GM12878 (cell line): ENCODE measurements at regions of chr11 and their contacts with region 1.

Region 1: GRCh38 chr11:124793466-124794278 is 6.5 kb downstream of the MSANTD2 start:
- DNase-seq: no peak
- ATAC-seq: peak; percentile 80
- H3K4me3 ChIP-seq: no peak overlapping the region
- H3K27ac ChIP-seq: no peak overlapping the region
- H3K4me1 ChIP-seq: peaks cover 16% of the 10 kb centered on the region
- H3K27me3 ChIP-seq: no peaks in the 10 kb centered on the region
- CTCF ChIP-seq: peak; percentile 65 to 72 (median 70)
- EP300 ChIP-seq: no peak
- POLR2A ChIP-seq: no peak
- RAD21 ChIP-seq: peak; percentile 68

Region 2: DNA sequence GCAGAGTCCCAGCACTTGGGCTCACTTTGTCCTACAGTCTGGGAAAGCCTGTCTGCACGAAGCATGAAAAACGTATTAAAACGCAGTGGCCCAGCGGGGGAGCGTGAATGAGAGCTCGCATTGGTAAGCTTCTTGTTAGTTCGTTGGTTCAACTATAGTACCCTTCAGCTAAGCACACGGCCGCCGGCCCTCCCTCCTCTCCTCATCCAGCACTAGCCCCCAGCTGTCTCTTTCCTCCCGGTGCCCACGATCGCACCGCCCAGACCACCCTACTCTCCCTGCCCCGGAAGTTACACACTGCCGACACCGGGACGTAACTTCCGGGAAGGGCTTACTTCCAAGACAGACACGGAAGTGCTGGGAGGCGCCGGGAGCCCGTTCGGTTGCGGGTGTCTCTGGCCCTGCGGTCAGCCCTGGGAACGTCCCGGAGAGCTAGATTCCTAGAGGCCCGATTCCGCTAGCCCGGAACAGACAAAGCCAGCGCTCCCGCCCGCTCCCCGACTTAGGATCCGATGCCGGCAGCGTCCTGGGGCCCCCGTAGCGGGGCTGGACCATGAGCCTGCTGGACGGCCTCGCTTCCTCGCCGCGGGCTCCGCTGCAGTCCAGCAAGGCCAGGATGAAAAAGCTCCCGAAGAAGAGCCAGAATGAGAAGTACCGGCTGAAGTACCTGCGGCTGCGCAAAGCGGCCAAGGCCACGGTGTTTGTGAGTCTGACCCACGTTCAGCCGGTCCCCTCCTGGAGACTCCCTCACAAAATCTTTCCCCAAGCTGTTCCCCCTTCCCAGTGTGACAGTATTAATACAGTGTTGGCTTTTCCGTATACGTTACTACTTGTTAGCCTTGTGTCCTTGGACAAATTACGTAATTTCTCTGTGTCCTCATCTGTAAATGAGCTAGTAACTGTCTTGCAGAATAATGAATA is 170.9 kb before region 1 on chr11 and contains the start of gene TBRG1:
- CTCF ChIA-PET with region 1: interaction called, 14 read pairs
- POLR2A ChIA-PET with region 1: no interaction called
- RAD21 ChIA-PET with region 1: no interaction called
- SMC1A ChIA-PET with region 1: no interaction called
- in situ Hi-C with region 1: no loop called
- intact Hi-C with region 1: no loop called
- DNase-seq: peak; percentile 50
- ATAC-seq: peak; percentile 96
- H3K4me3 ChIP-seq: peak within 1 kb of the TSS; percentile 95
- H3K27ac ChIP-seq: peak within 1 kb of the TSS; percentile 60
- H3K4me1 ChIP-seq: no peaks in the 10 kb centered on the region
- H3K27me3 ChIP-seq: peaks cover 0 to 2% of the 10 kb centered on the region in 2 experiments; a peak in 1 of 4 replicates
- CTCF ChIP-seq: no peak
- EP300 ChIP-seq: no peak
- POLR2A ChIP-seq: peak; percentile 97
- RAD21 ChIP-seq: no peak
- polyA plus RNA-seq, gene TBRG1: 12.3 to 18.6 TPM

Region 3: DNA sequence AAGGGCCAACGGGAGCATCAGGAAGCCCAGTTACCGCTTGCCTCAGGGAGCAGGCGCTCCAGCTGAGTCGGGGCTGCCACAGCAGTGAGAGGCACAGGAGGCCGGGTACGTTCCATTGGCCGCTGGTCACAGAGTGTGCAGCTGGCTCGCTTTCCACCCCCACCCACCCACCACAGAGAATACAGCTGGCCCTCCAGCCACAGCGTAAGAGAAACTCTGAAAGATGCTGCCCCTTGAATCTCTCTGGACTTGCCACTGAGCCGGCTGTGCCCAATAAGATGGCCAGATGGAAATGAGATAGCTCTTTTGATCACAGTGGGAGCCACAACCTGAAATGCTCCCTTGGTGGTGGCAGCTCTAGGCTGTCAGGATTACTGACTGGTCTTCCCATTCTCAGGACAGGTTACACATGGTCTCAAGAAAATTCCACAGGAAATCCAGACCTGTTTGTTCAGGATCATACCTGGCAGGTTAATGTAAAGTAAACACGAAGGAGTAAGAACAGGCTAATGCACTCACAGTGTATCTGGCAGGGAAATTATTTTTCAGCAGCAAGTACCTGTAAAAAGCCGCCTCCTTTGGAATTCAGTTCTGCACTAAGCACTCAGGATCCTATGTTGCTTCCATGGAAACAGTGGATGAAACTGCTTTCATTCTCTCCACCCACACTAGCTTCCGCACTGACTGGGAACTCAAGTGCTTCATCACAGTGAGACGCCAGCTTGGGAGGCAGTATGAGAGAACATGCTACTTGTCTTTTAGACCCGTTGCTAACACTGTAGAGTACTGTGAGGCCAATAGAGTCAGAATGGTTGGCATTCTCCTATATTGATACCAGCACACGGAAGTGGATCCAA is 136.7 kb before region 1 on chr11:
- CTCF ChIA-PET with region 1: interaction called, 11 read pairs
- POLR2A ChIA-PET with region 1: no interaction called
- RAD21 ChIA-PET with region 1: no interaction called
- SMC1A ChIA-PET with region 1: no interaction called
- in situ Hi-C with region 1: no loop called
- intact Hi-C with region 1: no loop called
- DNase-seq: no peak
- ATAC-seq: no peak
- H3K4me3 ChIP-seq: no peak overlapping the region
- H3K27ac ChIP-seq: no peak overlapping the region
- H3K4me1 ChIP-seq: no peaks in the 10 kb centered on the region
- H3K27me3 ChIP-seq: no peaks in the 10 kb centered on the region
- CTCF ChIP-seq: no peak
- EP300 ChIP-seq: no peak
- POLR2A ChIP-seq: no peak
- RAD21 ChIP-seq: no peak

Region 4: DNA sequence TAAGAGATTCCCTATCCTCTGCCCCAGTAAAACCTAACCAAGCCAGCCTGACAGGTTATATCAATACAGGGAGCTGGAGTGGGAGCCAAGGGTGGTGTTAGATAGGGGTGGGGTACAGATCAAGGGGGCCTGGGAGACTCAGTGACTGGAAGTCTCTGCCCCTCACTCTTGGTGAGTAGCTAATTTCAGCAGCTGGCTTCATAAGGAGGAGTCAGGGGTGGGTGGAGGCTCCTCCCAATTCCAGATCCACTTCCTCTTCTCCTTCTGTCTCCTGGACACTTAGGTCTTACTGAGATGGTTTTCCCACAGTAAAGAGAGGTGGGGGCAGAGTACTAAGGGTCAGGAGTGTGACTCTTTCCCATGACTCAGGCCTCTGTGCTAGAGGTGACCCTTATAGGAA is 40.5 kb before region 1 on chr11:
- CTCF ChIA-PET with region 1: interaction called, 272 read pairs
- POLR2A ChIA-PET with region 1: interaction called, 5 read pairs
- RAD21 ChIA-PET with region 1: interaction called, 5 read pairs
- SMC1A ChIA-PET with region 1: interaction called, 12 read pairs
- in situ Hi-C with region 1: no loop called
- intact Hi-C with region 1: no loop called
- DNase-seq: no peak
- ATAC-seq: no peak
- H3K4me3 ChIP-seq: no peak overlapping the region
- H3K27ac ChIP-seq: no peak overlapping the region
- H3K4me1 ChIP-seq: peaks cover 2% of the 10 kb centered on the region; the same call in 1 of the 2 replicates
- H3K27me3 ChIP-seq: no peaks in the 10 kb centered on the region
- CTCF ChIP-seq: no peak
- EP300 ChIP-seq: no peak
- POLR2A ChIP-seq: no peak
- RAD21 ChIP-seq: no peak

Region 5: GRCh38 chr11:124769801-124770639 is 23.7 kb before region 1 on chr11:
- CTCF ChIA-PET with region 1: interaction called, 272 read pairs
- POLR2A ChIA-PET with region 1: interaction called, 5 read pairs
- RAD21 ChIA-PET with region 1: interaction called, 3 read pairs
- SMC1A ChIA-PET with region 1: interaction called, 40 read pairs
- in situ Hi-C with region 1: no loop called
- intact Hi-C with region 1: no loop called
- DNase-seq: no peak
- ATAC-seq: no peak
- H3K4me3 ChIP-seq: no peak overlapping the region
- H3K27ac ChIP-seq: no peak overlapping the region
- H3K4me1 ChIP-seq: no peaks in the 10 kb centered on the region
- H3K27me3 ChIP-seq: no peaks in the 10 kb centered on the region
- CTCF ChIP-seq: no peak
- EP300 ChIP-seq: no peak
- POLR2A ChIP-seq: no peak
- RAD21 ChIP-seq: no peak

Region 6: DNA sequence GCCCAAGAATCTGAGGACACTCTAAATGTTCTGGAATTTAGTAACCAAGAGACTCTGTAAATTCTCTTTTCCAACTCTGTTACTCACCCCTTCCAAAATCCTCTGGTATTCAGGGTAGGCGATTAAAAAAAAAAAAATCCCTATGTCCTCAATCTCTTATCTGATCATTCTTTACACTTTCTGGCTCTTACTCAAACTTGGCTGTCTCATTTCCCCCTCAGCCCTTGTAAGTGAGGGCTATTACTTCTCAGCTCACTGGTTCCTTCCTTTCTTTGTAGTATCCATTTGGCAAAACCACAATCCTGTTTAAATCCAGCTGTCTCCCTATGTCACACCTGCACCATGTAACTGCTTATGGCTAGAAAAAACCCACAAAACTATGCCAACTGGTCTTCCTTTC is 19.2 kb after region 1 on chr11:
- CTCF ChIA-PET with region 1: interaction called, 14 read pairs
- POLR2A ChIA-PET with region 1: no interaction called
- RAD21 ChIA-PET with region 1: interaction called, 3 read pairs
- SMC1A ChIA-PET with region 1: interaction called, 7 read pairs
- in situ Hi-C with region 1: no loop called
- intact Hi-C with region 1: no loop called
- DNase-seq: no peak
- ATAC-seq: no peak
- H3K4me3 ChIP-seq: no peak overlapping the region
- H3K27ac ChIP-seq: no peak overlapping the region
- H3K4me1 ChIP-seq: no peaks in the 10 kb centered on the region
- H3K27me3 ChIP-seq: peaks cover 0 to 2% of the 10 kb centered on the region in 2 experiments; a peak in 2 of 4 replicates
- CTCF ChIP-seq: no peak
- EP300 ChIP-seq: no peak
- POLR2A ChIP-seq: no peak
- RAD21 ChIP-seq: no peak

Region 7: DNA sequence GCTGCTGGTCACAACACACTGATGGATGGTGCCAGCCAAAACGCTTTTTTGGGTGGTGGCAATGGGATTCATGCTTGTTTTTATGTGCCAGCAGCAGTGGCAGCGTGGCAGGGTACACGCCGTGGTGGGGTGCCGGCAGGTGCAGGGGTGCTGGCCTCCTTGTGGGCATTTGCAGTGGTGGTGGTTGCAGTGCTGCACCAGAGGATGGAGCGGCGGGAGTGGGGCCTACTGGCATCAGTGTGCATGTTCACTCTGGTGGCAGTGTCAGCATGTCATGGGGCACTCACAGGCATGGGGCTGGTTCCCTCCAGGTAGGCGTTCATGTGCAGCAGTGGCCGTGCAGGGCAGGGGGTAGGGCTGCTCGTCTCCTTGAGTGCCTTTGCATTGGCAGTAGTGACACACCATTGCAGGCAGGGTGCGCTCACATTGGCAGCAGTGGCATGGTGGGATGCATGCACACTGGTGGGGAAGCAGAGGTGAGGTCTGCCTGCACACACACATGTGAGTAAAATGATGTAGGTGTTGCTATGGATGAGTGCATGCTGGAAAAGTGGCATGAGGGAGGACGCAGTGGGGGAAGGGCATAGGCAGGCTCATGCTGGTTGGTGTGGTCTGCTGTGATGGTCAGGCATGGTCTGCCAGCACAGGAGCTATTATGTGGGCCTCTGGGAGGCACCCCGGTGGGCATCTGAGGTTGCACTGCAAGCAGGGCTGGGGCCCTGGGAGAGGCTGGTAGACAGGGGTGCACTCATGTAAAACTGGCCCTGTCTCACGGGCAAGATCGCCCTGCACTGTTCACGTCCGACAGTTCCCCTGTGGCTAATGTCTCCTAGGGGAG is 190.2 kb after region 1 on chr11:
- CTCF ChIA-PET with region 1: no interaction called
- POLR2A ChIA-PET with region 1: no interaction called
- RAD21 ChIA-PET with region 1: no interaction called
- SMC1A ChIA-PET with region 1: no interaction called
- in situ Hi-C with region 1: no loop called
- intact Hi-C with region 1: no loop called
- DNase-seq: no peak
- ATAC-seq: no peak
- H3K4me3 ChIP-seq: no peak overlapping the region
- H3K27ac ChIP-seq: no peak overlapping the region
- H3K4me1 ChIP-seq: no peaks in the 10 kb centered on the region
- H3K27me3 ChIP-seq: no peaks in the 10 kb centered on the region
- CTCF ChIP-seq: no peak
- EP300 ChIP-seq: no peak
- POLR2A ChIP-seq: no peak
- RAD21 ChIP-seq: no peak